Heart left ventricle (tissue), 16 donors: ENCODE measurements at regions of chrX and their contacts with region 1.

Region 1: GRCh38 chrX:132984058-132984650 is 25.7 kb upstream of the HS6ST2 start:
- DNase-seq: no peak
- ATAC-seq: no peak
- H3K4me3 ChIP-seq: no peak overlapping the region
- H3K27ac ChIP-seq: no peak overlapping the region
- H3K4me1 ChIP-seq: no peaks in the 10 kb centered on the region
- H3K27me3 ChIP-seq: peaks cover 0 to 23% (median 0%) of the 10 kb centered on the region in 9 donors
- CTCF ChIP-seq: no peak
- POLR2A ChIP-seq: no peak

Region 2: GRCh38 chrX:133134281-133134680 is 150.1 kb after region 1 on chrX:
- intact Hi-C with region 1: no loop called
- DNase-seq: no peak
- ATAC-seq: no peak
- H3K4me3 ChIP-seq: no peak overlapping the region
- H3K27ac ChIP-seq: no peak overlapping the region
- H3K4me1 ChIP-seq: no peaks in the 10 kb centered on the region
- H3K27me3 ChIP-seq: peaks cover 0 to 12% (median 0%) of the 10 kb centered on the region in 9 donors
- CTCF ChIP-seq: no peak
- POLR2A ChIP-seq: no peak

Region 3: GRCh38 chrX:133171962-133172708 is 188.0 kb after region 1 on chrX:
- intact Hi-C with region 1: loop called in 1 of 10 experiments (anchors 5 kb)
- DNase-seq: no peak
- ATAC-seq: no peak
- H3K4me3 ChIP-seq: no peak overlapping the region
- H3K27ac ChIP-seq: no peak overlapping the region
- H3K4me1 ChIP-seq: no peaks in the 10 kb centered on the region
- H3K27me3 ChIP-seq: peaks cover 0 to 22% (median 0%) of the 10 kb centered on the region in 9 donors
- CTCF ChIP-seq: peak in 8 of 12 donors; percentile 18 to 41 (median 28)
- POLR2A ChIP-seq: no peak